ENCODE measurements at regions of chr15 and their contacts with region 1.

Region 1: DNA sequence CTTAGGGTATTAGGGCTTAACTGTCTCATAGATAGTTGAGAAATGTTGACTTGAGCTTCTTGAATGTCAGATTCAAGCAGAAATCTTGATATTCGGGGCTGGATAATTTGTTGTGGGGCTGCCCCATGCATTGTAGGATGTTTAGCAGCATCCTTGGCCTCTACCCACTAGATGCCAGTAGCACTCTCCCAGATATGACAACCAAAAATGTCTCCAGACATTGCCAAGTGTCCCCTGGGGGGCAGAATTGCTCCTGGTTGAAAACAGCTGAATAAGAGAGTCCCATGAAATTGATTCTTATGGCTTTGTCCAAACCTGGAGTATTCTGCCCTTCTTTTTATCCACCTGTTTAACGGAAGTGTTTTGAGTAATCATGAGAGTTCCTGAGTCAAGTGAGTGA is 15.9 kb upstream of the LCMT2 start:
- DNase-seq: peak in 2 of 3 donors; percentile 31 to 34
- H3K4me3 ChIP-seq: no peak overlapping the region
- H3K27ac ChIP-seq: no peak overlapping the region
- H3K4me1 ChIP-seq: no peaks in the 10 kb centered on the region
- H3K27me3 ChIP-seq: no peaks in the 10 kb centered on the region

Region 2: DNA sequence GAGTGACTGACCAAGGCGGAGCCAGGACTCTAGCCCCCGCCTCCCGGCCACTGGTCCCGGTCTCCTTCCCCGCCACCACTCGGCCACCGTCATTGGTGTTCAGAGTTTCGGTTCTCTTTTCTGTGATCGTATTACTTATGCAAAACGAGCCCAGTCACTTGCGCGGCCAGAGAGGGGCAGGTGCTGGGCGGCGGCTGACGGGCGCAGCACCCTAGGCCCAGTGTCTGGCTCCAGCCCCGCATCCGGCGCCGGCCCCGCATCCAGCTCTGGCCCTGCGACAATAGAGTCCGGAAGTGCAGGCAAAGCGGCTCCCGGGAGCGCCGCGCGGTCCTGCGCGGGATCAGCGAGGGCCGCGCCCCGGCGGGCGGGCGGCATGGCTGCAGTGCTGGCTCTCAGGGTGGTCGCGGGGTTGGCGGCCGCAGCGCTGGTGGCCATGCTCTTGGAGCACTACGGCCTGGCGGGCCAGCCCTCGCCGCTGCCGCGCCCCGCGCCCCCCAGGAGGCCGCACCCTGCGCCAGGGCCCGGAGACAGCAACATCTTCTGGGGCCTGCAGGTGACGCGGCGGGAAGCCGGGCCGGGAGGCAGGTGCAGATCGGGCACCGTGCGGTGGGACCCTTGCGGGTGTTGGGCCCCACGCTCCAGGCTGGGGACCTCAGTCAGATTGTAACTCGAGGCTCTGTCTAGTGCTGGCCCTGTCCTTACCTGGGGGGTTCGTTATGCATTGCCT is 212.7 kb before region 1 on chr15 and contains the start of gene TMEM62:
- CTCF ChIA-PET with region 1: no interaction called
- POLR2A ChIA-PET with region 1: no interaction called
- DNase-seq: peak; percentile 60 to 83 (median 77)
- H3K4me3 ChIP-seq: peak within 1 kb of the TSS; percentile 81 to 97 (median 87)
- H3K27ac ChIP-seq: peak within 1 kb of the TSS; percentile 36 to 83
- H3K4me1 ChIP-seq: peaks cover 3 to 20% (median 15%) of the 10 kb centered on the region in 4 experiments
- H3K27me3 ChIP-seq: no peaks in the 10 kb centered on the region

Region 3: DNA sequence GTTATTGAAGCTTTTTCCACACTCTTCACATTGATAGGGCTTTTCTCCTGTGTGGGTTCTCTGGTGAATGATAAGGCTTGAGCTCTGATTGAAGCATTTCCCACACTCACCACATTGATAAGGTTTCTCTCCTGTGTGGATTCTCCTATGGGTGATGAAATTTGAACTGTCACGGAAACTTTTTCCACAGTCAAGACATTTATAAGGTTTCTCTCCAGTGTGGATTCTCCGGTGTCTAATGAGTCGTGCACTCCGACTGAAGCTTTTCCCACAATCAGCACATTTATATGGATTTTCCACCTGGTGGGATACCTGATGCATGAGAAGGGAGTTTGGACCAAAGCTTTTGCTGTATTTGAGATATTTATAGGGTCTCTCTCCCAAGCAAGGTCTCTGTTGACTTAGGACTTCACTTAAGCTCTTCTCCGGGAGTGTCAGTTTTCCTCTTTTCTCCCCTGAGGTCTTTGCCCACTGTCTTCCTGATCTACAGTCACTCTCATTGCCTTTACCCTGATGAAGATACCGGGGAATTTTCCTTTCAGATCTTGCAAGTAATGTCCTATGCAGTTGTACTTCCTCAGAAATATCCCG is 15.1 kb after region 1 on chr15:
- CTCF ChIA-PET with region 1: interaction called, 21 read pairs
- POLR2A ChIA-PET with region 1: no interaction called
- DNase-seq: no peak
- H3K4me3 ChIP-seq: peak overlapping the region in 1 of 7 experiments; percentile 49
- H3K27ac ChIP-seq: no peak overlapping the region
- H3K4me1 ChIP-seq: no peaks in the 10 kb centered on the region
- H3K27me3 ChIP-seq: no peaks in the 10 kb centered on the region